ENCODE measurements at regions of chr3 and their contacts with region 1.

Region 1: GRCh38 chr3:120558771-120559241 is 37.3 kb upstream of the NDUFB4 start:
- H3K4me3 Mint-ChIP-seq: peak overlapping the region; percentile 62
- H3K27ac Mint-ChIP-seq: peak overlapping the region; percentile 66
- H3K4me1 Mint-ChIP-seq: peaks cover 16% of the 10 kb centered on the region
- H3K27me3 Mint-ChIP-seq: peaks cover 5% of the 10 kb centered on the region

Region 2: DNA sequence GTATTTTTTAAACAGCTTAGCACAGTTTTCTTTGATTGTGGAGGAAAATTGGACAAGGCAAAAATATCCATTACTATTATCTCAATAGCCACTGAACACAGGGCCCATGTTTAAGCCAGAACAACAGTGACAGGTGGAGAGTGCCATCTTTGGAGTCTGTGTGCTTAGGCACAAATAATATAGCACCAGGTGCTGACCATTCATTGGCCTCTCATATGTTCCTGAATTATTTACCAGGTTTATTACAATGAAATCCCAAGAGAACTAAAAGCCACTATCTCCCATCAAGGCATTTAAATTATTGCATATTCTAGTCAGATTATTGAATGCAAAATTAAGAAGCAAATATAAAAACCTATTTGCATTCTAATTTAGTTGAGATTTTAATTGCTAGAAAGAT is 313.4 kb before region 1 on chr3:
- intact Hi-C with region 1: loop called (anchors 1 kb)
- H3K4me3 Mint-ChIP-seq: no peak overlapping the region
- H3K27ac Mint-ChIP-seq: no peak overlapping the region
- H3K4me1 Mint-ChIP-seq: peaks cover 5% of the 10 kb centered on the region
- H3K27me3 Mint-ChIP-seq: no peaks in the 10 kb centered on the region

Region 3: DNA sequence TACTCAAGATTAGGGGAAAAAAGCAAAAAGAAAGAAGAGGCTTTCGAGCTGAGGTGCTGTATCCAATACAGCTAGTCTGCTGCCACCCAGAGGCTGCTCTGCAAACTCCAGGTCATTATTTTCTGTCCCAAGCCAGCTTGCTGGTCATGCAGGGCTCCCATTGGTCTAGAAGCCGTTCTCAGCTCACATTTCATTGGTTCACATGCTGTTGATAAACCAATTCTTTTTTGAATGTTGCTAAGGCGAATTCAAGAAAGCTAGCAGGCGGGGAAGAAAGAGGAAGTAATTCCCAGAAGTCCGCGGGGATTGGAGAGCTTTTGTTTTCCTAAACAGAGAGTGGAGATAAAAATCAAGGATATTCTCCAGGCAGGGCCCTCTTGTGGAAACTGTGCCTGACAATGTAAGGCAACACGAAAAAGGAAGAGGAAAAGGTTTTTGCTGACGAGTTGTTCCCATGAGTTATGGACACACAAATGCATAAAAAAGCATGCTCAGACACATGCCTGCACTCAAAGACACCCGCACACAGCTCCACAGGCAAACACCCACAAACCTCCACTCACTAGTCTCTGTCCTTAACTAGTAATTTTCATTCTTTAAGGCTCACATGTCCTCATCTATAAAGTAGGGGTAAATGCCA is 141.4 kb before region 1 on chr3:
- intact Hi-C with region 1: loop called (anchors 2 kb)
- H3K4me3 Mint-ChIP-seq: peak overlapping the region; percentile 65
- H3K27ac Mint-ChIP-seq: peak overlapping the region; percentile 69
- H3K4me1 Mint-ChIP-seq: peaks cover 31% of the 10 kb centered on the region
- H3K27me3 Mint-ChIP-seq: peaks cover 10% of the 10 kb centered on the region

Region 4: DNA sequence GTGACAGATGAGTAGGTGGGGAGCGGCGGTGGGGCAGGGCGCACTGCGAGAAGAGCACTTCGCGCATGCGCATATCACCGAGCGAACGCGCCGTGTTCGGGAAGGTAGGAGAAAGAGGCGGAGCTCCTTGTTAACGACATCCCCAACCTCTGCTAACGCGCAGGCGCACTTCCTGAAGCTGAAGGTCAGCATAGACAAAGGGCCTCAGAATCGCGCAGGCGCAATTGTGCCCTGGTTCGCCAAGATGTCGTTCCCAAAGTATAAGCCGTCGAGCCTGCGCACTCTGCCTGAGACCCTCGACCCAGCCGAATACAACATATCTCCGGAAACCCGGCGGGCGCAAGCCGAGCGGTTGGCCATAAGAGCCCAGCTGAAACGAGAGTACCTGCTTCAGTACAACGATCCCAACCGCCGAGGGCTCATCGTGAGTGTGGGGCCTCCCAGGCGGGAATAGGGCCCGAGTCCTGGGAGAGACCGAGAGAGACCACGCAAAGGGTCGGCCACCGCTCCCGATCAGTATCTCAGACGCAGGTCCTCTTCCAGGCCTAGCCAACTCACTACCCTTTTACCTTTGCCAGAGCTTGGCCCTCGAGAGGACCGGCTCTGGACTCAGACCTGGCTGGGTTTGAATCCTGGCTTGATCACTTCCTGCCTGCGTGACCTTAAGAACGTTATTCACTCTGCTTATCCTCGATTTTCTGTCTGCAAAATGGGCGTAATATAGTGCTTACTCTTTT is 37.5 kb after region 1 on chr3 and contains the start of gene NDUFB4:
- intact Hi-C with region 1: no loop called
- H3K4me3 Mint-ChIP-seq: peak within 1 kb of the TSS; percentile 88
- H3K27ac Mint-ChIP-seq: peak within 1 kb of the TSS; percentile 93
- H3K4me1 Mint-ChIP-seq: peaks cover 17% of the 10 kb centered on the region
- H3K27me3 Mint-ChIP-seq: no peaks in the 10 kb centered on the region

Region 5: GRCh38 chr3:120795017-120795648 is 236.3 kb after region 1 on chr3:
- intact Hi-C with region 1: loop called (anchors 1 kb)
- H3K4me3 Mint-ChIP-seq: no peak overlapping the region
- H3K27ac Mint-ChIP-seq: no peak overlapping the region
- H3K4me1 Mint-ChIP-seq: no peaks in the 10 kb centered on the region
- H3K27me3 Mint-ChIP-seq: no peaks in the 10 kb centered on the region